ENCODE measurements at regions of chr9 and their contacts with region 1.

Region 1: GRCh38 chr9:128818099-128818838 is at the start of gene ENDOG:
- DNase-seq: peak; percentile 94
- ATAC-seq: peak; percentile 96
- H3K4me3 ChIP-seq: peak within 1 kb of the TSS; percentile 60
- H3K27ac ChIP-seq: peak within 1 kb of the TSS; percentile 60
- H3K4me1 ChIP-seq: peaks cover 7% of the 10 kb centered on the region; the same call in 1 of the 2 replicates
- H3K27me3 ChIP-seq: no peaks in the 10 kb centered on the region
- CTCF ChIP-seq: peak; percentile 92 to 100 (median 99)
- EP300 ChIP-seq: no peak
- POLR2A ChIP-seq: peak; percentile 82
- RAD21 ChIP-seq: peak; percentile 39; the same call in 1 of the 2 replicates
- polyA plus RNA-seq, gene ENDOG: 0.84 to 1.8 TPM

Region 2: DNA sequence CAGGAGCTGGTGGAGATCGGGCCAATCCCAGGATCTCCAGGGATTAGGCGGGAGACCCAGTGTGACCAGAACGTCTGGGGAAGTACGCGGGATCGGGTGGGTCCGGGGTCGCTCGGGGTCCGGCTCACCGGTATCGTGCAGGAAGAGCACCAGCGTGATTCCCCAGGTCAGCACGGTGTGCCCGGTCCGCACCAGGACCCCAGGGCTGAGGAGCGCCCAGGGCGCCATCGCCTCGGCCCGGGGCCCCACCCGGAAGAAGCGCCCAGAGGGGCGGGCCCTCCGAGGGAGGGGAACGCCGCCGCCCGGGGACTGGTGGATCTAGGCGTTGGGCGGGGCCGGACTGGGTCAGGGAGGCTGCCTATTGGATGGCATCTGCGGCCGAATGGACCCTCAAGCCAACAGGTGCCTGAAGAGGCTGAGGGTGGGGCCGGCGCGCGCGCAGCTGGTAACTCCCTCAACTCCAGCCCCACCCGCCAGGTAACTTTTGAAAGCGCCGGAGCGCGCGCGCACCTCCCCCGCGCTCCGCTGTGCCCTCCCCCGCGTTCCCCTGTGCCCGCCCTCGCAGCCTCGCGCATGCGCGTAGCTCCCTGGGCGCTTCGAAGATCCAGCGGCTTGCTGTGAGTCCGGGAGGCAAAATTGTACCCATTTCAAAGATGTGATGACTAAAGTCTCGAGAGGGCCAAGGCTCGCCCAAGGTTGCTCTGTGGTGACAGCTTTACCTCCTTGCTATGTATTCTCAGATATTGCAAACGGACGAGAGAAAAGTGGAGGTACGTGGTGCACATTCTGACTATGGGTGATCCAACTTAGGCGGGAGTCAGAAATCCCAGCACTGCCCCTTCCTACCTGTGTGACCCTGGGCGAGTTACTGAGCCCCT is 94.2 kb before region 1 on chr9 and contains the start of gene ZDHHC12:
- CTCF ChIA-PET with region 1: interaction called, 10 read pairs
- POLR2A ChIA-PET with region 1: interaction called, 7 read pairs
- RAD21 ChIA-PET with region 1: interaction called, 8 read pairs
- SMC1A ChIA-PET with region 1: no interaction called
- in situ Hi-C with region 1: no loop called
- intact Hi-C with region 1: no loop called
- DNase-seq: peak; percentile 92
- ATAC-seq: peak; percentile 99
- H3K4me3 ChIP-seq: peak within 1 kb of the TSS; percentile 100
- H3K27ac ChIP-seq: peak within 1 kb of the TSS; percentile 63
- H3K4me1 ChIP-seq: peaks cover 5% of the 10 kb centered on the region
- H3K27me3 ChIP-seq: no peaks in the 10 kb centered on the region
- CTCF ChIP-seq: no peak
- EP300 ChIP-seq: no peak
- POLR2A ChIP-seq: peak; percentile 99
- RAD21 ChIP-seq: no peak
- polyA plus RNA-seq, gene ZDHHC12: 0.95 to 9.9 TPM

Region 3: DNA sequence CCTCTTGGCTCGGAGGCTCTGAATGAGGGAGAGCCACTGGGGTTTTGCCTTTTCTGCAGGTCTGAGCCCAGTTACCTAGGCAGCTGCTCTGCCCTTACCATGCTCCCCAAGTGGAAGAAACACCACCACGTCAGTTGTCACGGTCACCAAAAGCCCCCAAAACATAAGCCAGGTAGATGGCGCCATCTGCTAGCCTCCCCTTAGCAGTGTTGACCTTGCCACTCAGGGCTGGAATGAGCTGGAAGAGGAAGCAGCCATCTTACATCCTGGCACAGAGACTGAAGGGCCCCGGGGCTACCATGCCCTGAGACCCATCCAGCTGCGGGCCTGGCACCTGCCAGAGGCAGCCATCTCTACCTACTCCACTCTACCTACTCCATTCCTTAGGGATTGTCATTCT is 53.9 kb before region 1 on chr9:
- CTCF ChIA-PET with region 1: interaction called, 6 read pairs
- POLR2A ChIA-PET with region 1: interaction called, 7 read pairs
- RAD21 ChIA-PET with region 1: interaction called, 11 read pairs
- SMC1A ChIA-PET with region 1: interaction called, 3 read pairs
- in situ Hi-C with region 1: no loop called
- intact Hi-C with region 1: no loop called
- DNase-seq: no peak
- ATAC-seq: peak; percentile 78
- H3K4me3 ChIP-seq: no peak overlapping the region
- H3K27ac ChIP-seq: no peak overlapping the region
- H3K4me1 ChIP-seq: no peaks in the 10 kb centered on the region
- H3K27me3 ChIP-seq: no peaks in the 10 kb centered on the region
- CTCF ChIP-seq: peak; percentile 9 to 30 (median 12); a peak in 1 of 6 replicates
- EP300 ChIP-seq: no peak
- POLR2A ChIP-seq: no peak
- RAD21 ChIP-seq: peak; percentile 39; the same call in 1 of the 2 replicates

Region 4: GRCh38 chr9:128786681-128787601 is 31.3 kb before region 1 on chr9 and contains the start of gene TBC1D13:
- CTCF ChIA-PET with region 1: interaction called, 7 read pairs
- POLR2A ChIA-PET with region 1: interaction called, 13 read pairs
- RAD21 ChIA-PET with region 1: interaction called, 6 read pairs
- SMC1A ChIA-PET with region 1: no interaction called
- in situ Hi-C with region 1: no loop called
- intact Hi-C with region 1: no loop called
- DNase-seq: peak; percentile 31
- ATAC-seq: peak; percentile 99
- H3K4me3 ChIP-seq: peak within 1 kb of the TSS; percentile 97
- H3K27ac ChIP-seq: peak within 1 kb of the TSS; percentile 58
- H3K4me1 ChIP-seq: peaks cover 10% of the 10 kb centered on the region
- H3K27me3 ChIP-seq: no peaks in the 10 kb centered on the region
- CTCF ChIP-seq: no peak
- EP300 ChIP-seq: peak in 1 of 2 experiments; percentile 31; a peak in 1 of 4 replicates
- POLR2A ChIP-seq: peak; percentile 83
- RAD21 ChIP-seq: no peak
- polyA plus RNA-seq, gene TBC1D13: 3.0 to 3.1 TPM